CD4-positive, alpha-beta memory T cell (primary cell): ENCODE measurements at regions of chr1 and their contacts with region 1.

Region 1: DNA sequence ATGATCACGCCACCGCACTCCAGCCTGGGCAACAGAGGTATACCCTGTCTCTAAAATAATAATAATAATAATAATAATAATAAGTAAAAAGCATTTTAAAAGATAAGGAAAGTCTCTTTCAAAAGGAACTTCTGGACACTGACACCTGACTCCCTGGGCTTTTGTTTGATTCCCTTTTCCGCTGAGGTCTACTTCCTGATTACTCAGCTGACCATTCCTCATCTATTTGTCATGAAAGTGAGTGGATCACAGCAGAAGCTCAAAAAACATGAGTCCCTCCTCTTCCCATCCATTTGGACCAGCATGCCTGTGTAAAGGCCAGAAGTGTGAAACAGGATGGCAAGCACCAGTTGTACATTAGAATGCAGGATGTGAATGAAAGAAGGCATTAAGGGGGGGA is 61.1 kb upstream of the FBXO28 start:
- DNase-seq: no peak
- H3K4me3 ChIP-seq: no peak overlapping the region
- H3K4me3 Mint-ChIP-seq: no peak overlapping the region
- H3K27ac ChIP-seq: no peak overlapping the region
- H3K27ac Mint-ChIP-seq: no peak overlapping the region
- H3K4me1 ChIP-seq: peaks cover 5% of the 10 kb centered on the region
- H3K4me1 Mint-ChIP-seq: peaks cover 0 to 3% (median 1%) of the 10 kb centered on the region in 4 donors
- H3K27me3 ChIP-seq: no peaks in the 10 kb centered on the region
- H3K27me3 Mint-ChIP-seq: peaks cover 12 to 14% of the 10 kb centered on the region in 2 donors

Region 2: DNA sequence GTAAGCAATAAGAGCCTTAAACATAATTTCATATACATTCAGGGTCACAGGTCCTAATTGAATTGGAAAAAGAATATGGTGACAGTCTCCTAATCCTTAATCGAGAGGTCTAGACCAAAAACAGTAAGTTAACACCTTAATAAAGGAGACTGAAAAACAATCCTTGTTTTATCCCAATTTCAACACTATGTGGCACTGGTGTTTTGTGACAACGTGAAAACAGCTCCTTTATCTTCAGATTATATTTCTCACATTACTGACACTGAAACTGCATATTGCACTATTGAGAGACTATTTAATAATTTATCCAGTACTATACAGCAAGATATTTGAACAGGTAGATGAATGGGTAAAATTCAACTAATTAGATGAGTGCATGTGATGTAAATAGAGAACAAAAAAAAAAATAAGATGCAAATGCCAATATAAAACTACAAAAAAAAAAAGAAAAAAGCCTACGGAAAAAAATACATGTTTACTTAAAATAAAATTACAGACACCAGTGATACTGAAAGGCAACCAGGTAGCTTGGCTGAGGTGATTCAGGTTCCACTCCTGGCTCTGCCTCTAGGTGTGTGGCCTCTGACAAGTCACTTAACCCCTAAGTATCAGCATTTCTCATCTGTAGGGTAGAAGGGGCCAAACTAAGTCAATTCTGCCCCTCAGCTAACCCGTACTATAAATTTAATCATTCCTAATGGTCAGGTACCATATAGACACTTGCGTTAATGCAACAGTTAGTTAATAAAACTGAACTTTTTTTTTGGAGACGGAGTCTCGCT is 240.9 kb before region 1 on chr1:
- CTCF ChIA-PET with region 1: interaction called, 36 read pairs
- POLR2A ChIA-PET with region 1: no interaction called
- intact Hi-C with region 1: loop called (anchors 1 kb)
- DNase-seq: peak in 4 of 5 donors; percentile 40 to 51 (median 47)
- H3K4me3 ChIP-seq: no peak overlapping the region
- H3K4me3 Mint-ChIP-seq: no peak overlapping the region
- H3K27ac ChIP-seq: no peak overlapping the region
- H3K27ac Mint-ChIP-seq: peak overlapping the region in 3 of 7 donors; percentile 27 to 72 (median 57)
- H3K4me1 ChIP-seq: peaks cover 17% of the 10 kb centered on the region
- H3K4me1 Mint-ChIP-seq: peaks cover 23 to 37% (median 32%) of the 10 kb centered on the region in 4 donors
- H3K27me3 ChIP-seq: no peaks in the 10 kb centered on the region
- H3K27me3 Mint-ChIP-seq: no peaks in the 10 kb centered on the region

Region 3: DNA sequence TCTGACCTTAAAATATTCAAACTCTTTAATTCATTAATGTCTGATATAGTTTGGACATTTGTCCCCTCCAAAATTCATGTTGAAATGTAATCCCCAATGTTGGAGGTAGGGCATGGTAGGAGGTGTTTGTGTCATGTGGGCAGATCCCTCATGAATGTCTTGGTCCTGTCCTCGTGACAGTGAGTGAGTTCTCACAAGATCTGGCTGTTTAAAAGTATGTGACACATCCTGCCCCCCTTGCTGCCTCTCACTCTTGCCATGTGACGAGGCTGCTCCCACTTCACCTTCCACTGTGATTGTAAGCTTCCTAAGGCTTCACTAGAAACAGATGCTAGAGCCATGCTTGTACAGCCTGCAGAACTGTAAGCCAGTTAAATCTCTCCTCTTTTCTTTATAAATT is 39.8 kb after region 1 on chr1:
- CTCF ChIA-PET with region 1: no interaction called
- POLR2A ChIA-PET with region 1: no interaction called
- intact Hi-C with region 1: no loop called
- DNase-seq: no peak
- H3K4me3 ChIP-seq: no peak overlapping the region
- H3K4me3 Mint-ChIP-seq: no peak overlapping the region
- H3K27ac ChIP-seq: no peak overlapping the region
- H3K27ac Mint-ChIP-seq: peak overlapping the region in 1 of 7 donors; percentile 33
- H3K4me1 ChIP-seq: no peaks in the 10 kb centered on the region
- H3K4me1 Mint-ChIP-seq: no peaks in the 10 kb centered on the region
- H3K27me3 ChIP-seq: no peaks in the 10 kb centered on the region
- H3K27me3 Mint-ChIP-seq: peaks cover 18 to 23% of the 10 kb centered on the region in 2 donors